ENCODE measurements at regions of chr2 and their contacts with region 1.

Region 1: DNA sequence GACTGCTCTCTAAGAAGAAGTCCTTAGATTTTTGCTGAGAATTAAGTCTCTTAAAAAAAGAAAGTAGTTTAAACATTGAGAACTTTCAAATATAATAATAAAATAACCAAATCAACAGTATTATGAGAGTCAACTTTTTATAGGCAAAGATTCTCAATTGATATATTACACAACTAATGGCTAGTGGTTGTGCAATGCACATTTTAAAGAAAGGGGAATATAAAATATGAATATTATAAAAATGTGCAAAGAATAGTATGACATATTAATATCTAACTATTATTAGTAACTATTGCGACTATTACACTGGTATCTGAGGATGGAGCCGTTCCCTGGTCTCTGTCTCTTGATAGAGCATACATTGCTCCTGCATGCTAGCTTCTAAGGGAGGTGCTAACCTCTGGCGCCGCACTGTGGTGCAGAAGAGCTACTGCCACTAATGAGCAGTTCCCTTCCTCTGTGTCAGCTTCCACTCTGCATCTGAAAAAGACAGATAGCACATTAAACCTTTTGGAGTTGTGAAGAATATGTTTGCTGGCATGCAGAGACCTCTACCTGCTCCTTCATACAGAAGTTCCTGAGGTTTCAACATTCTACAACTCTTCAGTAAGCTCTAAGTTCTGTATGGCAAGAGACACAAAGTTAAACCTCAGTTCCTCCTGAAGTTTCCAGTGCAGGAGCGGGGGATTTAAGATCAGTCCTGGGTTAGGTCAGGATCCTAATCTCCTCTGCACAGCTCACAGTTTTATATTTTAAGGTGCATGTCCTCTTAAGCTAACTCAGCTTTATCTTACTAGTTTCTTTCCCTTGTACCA is 3.5 kb upstream of the SLC9A2 start:
- DNase-seq: peak; percentile 80
- ATAC-seq: peak; percentile 86
- H3K4me3 Mint-ChIP-seq: no peak overlapping the region
- H3K27ac Mint-ChIP-seq: no peak overlapping the region
- H3K4me1 Mint-ChIP-seq: peaks cover 15% of the 10 kb centered on the region
- H3K27me3 Mint-ChIP-seq: peaks cover 35% of the 10 kb centered on the region

Region 2: DNA sequence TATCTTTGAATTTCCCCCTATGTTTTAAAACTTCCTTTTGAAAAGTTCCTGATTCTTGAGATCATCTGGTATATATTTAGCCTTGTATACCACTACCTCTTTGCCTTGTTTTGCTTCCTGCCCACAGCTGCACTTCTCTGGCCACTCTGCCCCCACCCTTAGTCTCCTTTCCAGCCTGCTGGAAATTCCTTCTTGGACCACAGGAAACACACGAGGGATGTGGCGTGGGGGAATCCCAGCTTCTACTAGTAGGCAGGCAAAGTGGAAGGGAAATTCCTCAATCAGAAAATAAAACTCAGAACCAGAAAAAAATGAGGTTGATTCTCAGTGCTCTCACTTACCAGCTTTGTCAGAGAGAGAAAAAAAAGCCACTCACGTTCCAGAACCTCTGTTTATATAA is 179.5 kb before region 1 on chr2:
- CTCF ChIA-PET with region 1: no interaction called
- POLR2A ChIA-PET with region 1: no interaction called
- intact Hi-C with region 1: no loop called
- DNase-seq: peak; percentile 38
- ATAC-seq: no peak
- H3K4me3 Mint-ChIP-seq: no peak overlapping the region
- H3K27ac Mint-ChIP-seq: peak overlapping the region; percentile 71
- H3K4me1 Mint-ChIP-seq: peaks cover 30% of the 10 kb centered on the region
- H3K27me3 Mint-ChIP-seq: no peaks in the 10 kb centered on the region

Region 3: GRCh38 chr2:102520028-102520427 is 95.8 kb before region 1 on chr2:
- CTCF ChIA-PET with region 1: interaction called, 10 read pairs
- POLR2A ChIA-PET with region 1: no interaction called
- intact Hi-C with region 1: loop called (anchors 1 kb)
- DNase-seq: peak; percentile 52
- ATAC-seq: peak; percentile 80
- H3K4me3 Mint-ChIP-seq: no peak overlapping the region
- H3K27ac Mint-ChIP-seq: no peak overlapping the region
- H3K4me1 Mint-ChIP-seq: no peaks in the 10 kb centered on the region
- H3K27me3 Mint-ChIP-seq: peaks cover 2% of the 10 kb centered on the region

Region 4: GRCh38 chr2:102604746-102605145 is 11.1 kb before region 1 on chr2:
- CTCF ChIA-PET with region 1: interaction called, 19 read pairs
- POLR2A ChIA-PET with region 1: no interaction called
- intact Hi-C with region 1: no loop called
- DNase-seq: no peak
- ATAC-seq: no peak
- H3K4me3 Mint-ChIP-seq: no peak overlapping the region
- H3K27ac Mint-ChIP-seq: no peak overlapping the region
- H3K4me1 Mint-ChIP-seq: no peaks in the 10 kb centered on the region
- H3K27me3 Mint-ChIP-seq: peaks cover 18% of the 10 kb centered on the region

Region 5: GRCh38 chr2:102632380-102633175 is 16.7 kb after region 1 on chr2:
- CTCF ChIA-PET with region 1: interaction called, 14 read pairs
- POLR2A ChIA-PET with region 1: no interaction called
- intact Hi-C with region 1: no loop called
- DNase-seq: no peak
- ATAC-seq: peak; percentile 57
- H3K4me3 Mint-ChIP-seq: no peak overlapping the region
- H3K27ac Mint-ChIP-seq: no peak overlapping the region
- H3K4me1 Mint-ChIP-seq: peaks cover 5% of the 10 kb centered on the region
- H3K27me3 Mint-ChIP-seq: no peaks in the 10 kb centered on the region

Region 6: DNA sequence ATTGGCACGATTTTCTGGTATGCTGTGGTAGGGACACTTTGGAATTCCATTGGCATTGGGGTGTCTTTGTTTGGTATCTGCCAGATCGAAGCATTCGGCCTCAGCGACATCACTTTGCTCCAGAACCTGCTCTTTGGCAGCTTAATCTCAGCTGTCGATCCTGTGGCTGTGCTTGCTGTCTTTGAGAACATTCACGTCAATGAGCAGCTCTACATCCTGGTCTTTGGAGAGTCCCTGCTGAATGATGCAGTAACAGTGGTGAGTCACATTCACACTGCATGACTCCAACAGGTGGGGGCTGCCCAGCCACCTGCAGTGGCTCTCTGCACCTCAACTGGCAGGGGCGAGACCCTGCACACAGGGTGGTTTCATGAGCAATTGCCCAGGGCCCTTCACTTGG is 41.9 kb after region 1 on chr2:
- CTCF ChIA-PET with region 1: interaction called, 3 read pairs
- POLR2A ChIA-PET with region 1: no interaction called
- intact Hi-C with region 1: loop called in 1 of 2 experiments (anchors 2 kb)
- DNase-seq: peak; percentile 73
- ATAC-seq: peak; percentile 99
- H3K4me3 Mint-ChIP-seq: no peak overlapping the region
- H3K27ac Mint-ChIP-seq: peak overlapping the region; percentile 80
- H3K4me1 Mint-ChIP-seq: peaks cover 24% of the 10 kb centered on the region
- H3K27me3 Mint-ChIP-seq: no peaks in the 10 kb centered on the region

Region 7: DNA sequence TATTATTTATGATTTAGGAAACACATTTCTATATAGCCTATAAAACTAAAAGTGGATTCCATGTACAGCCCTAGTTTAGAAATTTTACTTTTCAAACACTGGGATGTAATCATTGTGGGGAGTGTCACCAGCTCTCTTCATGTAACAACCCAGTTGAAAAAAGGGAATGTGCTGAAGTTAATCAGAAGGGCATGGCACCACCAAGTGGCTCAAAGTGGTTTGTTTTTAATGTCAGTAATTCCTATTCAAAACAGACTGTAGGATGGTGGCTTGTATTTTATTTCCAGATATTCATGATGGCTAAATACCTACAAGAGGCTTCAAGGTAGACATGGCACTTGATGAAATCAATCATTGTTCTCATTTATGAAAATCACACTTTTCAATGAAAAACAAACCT is 87.9 kb after region 1 on chr2:
- CTCF ChIA-PET with region 1: interaction called, 9 read pairs
- POLR2A ChIA-PET with region 1: no interaction called
- intact Hi-C with region 1: loop called in 1 of 2 experiments (anchors 1 kb)
- DNase-seq: peak; percentile 40
- ATAC-seq: no peak
- H3K4me3 Mint-ChIP-seq: no peak overlapping the region
- H3K27ac Mint-ChIP-seq: no peak overlapping the region
- H3K4me1 Mint-ChIP-seq: no peaks in the 10 kb centered on the region
- H3K27me3 Mint-ChIP-seq: peaks cover 4% of the 10 kb centered on the region

Region 8: DNA sequence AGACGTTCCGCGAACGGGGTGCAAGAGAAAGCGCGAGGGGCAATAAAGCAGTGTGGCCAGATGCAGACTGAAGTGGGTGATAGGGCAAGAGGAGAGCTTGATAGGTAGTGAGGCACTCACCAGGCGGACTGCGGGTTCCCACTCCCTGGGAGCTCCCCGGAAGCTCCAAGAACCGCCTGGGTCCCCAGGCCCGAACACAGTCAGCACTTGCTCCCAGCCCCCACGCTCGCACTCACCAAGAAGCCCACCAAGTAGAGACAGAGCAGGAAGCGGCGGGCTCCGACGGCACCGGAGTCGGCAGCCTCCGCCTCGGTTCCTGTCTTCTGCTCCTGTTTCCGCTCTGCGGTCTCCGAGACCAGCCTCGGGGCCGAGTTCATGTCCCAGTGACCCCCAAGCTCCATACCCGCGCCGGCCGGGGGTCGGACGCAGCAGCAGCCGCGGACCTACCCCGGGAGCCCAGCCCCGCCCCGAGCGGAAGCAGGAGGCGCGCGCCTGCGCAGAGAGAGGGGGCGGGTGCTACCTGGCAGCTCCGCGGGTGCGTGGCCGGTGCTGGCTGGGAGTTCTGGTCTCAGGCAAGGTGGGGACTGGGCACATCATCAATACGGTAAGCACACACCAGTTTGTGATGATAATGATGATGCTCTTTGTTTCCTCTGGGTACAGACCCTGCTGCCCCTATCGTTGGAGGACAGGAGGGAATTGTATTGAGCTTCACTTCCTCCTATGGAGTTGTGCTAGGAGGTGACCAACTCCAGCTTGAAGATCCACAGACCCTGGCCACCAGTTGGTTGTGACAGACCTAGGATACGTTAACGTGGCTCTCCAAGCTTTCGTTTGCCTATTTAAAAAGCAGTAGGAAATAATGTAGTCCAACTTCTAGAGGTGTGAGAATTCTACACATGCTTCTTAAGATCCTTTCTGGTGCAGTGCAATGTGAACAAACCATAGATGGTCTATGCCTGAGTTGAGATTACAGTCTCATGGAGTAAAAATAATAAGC is 120.9 kb after region 1 on chr2:
- CTCF ChIA-PET with region 1: interaction called, 17 read pairs
- POLR2A ChIA-PET with region 1: no interaction called
- intact Hi-C with region 1: no loop called
- DNase-seq: peak; percentile 91
- ATAC-seq: peak; percentile 94
- H3K4me3 Mint-ChIP-seq: peak overlapping the region; percentile 96
- H3K27ac Mint-ChIP-seq: peak overlapping the region; percentile 91
- H3K4me1 Mint-ChIP-seq: peaks cover 31% of the 10 kb centered on the region
- H3K27me3 Mint-ChIP-seq: no peaks in the 10 kb centered on the region

Region 9: GRCh38 chr2:102753563-102754159 is 137.8 kb after region 1 on chr2:
- CTCF ChIA-PET with region 1: no interaction called
- POLR2A ChIA-PET with region 1: no interaction called
- intact Hi-C with region 1: no loop called
- DNase-seq: peak; percentile 38
- ATAC-seq: no peak
- H3K4me3 Mint-ChIP-seq: no peak overlapping the region
- H3K27ac Mint-ChIP-seq: no peak overlapping the region
- H3K4me1 Mint-ChIP-seq: no peaks in the 10 kb centered on the region
- H3K27me3 Mint-ChIP-seq: no peaks in the 10 kb centered on the region